ENCODE measurements at regions of chr3 and their contacts with region 1.

Region 1: GRCh38 chr3:133821767-133822638 is 16.4 kb downstream of the SRPRB start:
- DNase-seq: no peak
- H3K4me3 ChIP-seq: no peak overlapping the region
- H3K27ac ChIP-seq: no peak overlapping the region
- H3K4me1 ChIP-seq: peaks cover 0 to 2% (median 0%) of the 10 kb centered on the region in 4 experiments
- H3K27me3 ChIP-seq: no peaks in the 10 kb centered on the region

Region 2: GRCh38 chr3:133805527-133806475 is 16.2 kb before region 1 on chr3 and contains the start of gene SRPRB:
- CTCF ChIA-PET with region 1: interaction called, 13 read pairs
- POLR2A ChIA-PET with region 1: no interaction called
- DNase-seq: peak; percentile 94 to 96 (median 95)
- H3K4me3 ChIP-seq: peak within 1 kb of the TSS; percentile 71 to 99 (median 95)
- H3K27ac ChIP-seq: peak within 1 kb of the TSS in 1 of 2 experiments; percentile 60
- H3K4me1 ChIP-seq: peaks cover 5 to 14% (median 8%) of the 10 kb centered on the region in 4 experiments
- H3K27me3 ChIP-seq: peaks cover 0 to 7% (median 0%) of the 10 kb centered on the region in 5 experiments

Region 3: DNA sequence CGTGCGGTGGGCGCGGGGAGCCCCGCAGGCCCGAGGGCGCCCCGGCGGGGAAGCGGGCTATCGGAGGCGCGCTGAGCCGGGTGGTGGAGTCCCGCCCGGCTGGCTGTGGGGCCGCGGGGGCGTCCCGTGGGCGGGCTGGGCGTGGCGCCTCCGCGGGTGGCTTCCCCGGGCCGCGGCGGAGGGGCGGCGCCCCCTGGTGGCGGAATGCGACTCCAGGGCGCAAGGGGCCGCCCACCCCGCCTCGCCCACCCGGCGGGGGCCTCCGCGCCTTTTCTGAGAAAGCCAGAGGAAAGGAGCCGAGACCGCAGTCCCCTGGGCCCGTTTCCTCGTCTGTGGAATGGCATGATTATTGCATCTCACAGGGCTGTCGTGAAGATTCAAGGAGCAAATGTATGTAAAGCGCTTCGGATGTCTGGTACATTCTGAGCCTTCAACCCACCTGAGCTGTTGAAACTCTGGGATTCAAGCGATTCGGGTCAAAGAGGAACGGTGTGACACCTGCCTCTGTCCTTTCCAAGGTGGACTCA is 105.6 kb after region 1 on chr3:
- CTCF ChIA-PET with region 1: interaction called, 35 read pairs
- POLR2A ChIA-PET with region 1: no interaction called
- DNase-seq: peak; percentile 64 to 87 (median 82)
- H3K4me3 ChIP-seq: peak overlapping the region; percentile 44 to 81 (median 65)
- H3K27ac ChIP-seq: no peak overlapping the region
- H3K4me1 ChIP-seq: peaks cover 0 to 18% (median 15%) of the 10 kb centered on the region in 4 experiments
- H3K27me3 ChIP-seq: peaks cover 0 to 3% (median 0%) of the 10 kb centered on the region in 5 experiments

Measured in common myeloid progenitor, CD34-positive (primary cell).